Activated T-helper 2 cell treated with anti-CD3 and anti-CD28 coated beads, Interferon-gamma antibody, Interleukin-2, Interleukin-4, amounts not matched to agents 10 μg/mL and 5 μg/mL and 100 μg/mL, durations not matched to agents 14 hours and 24 hours and 36 hours (primary cell): ENCODE measurements at regions of chr2 and their contacts with region 1.

Region 1: GRCh38 chr2:68751397-68752339 is 17.1 kb downstream of the ARHGAP25 start:
- DNase-seq: peak; percentile 80
- H3K4me3 Mint-ChIP-seq: no peak overlapping the region
- H3K27ac Mint-ChIP-seq: peak overlapping the region; percentile 76
- H3K4me1 Mint-ChIP-seq: peaks cover 73% of the 10 kb centered on the region
- H3K27me3 Mint-ChIP-seq: no peaks in the 10 kb centered on the region

Region 2: GRCh38 chr2:68487773-68488355 is 263.8 kb before region 1 on chr2:
- intact Hi-C with region 1: loop called (anchors 5 kb)
- DNase-seq: no peak
- H3K4me3 Mint-ChIP-seq: no peak overlapping the region
- H3K27ac Mint-ChIP-seq: no peak overlapping the region
- H3K4me1 Mint-ChIP-seq: peaks cover 11% of the 10 kb centered on the region
- H3K27me3 Mint-ChIP-seq: no peaks in the 10 kb centered on the region

Region 3: GRCh38 chr2:68766376-68766845 is 14.7 kb after region 1 on chr2:
- intact Hi-C with region 1: loop called (anchors 1 kb)
- DNase-seq: peak; percentile 70
- H3K4me3 Mint-ChIP-seq: peak overlapping the region; percentile 68
- H3K27ac Mint-ChIP-seq: peak overlapping the region; percentile 93
- H3K4me1 Mint-ChIP-seq: peaks cover 91% of the 10 kb centered on the region
- H3K27me3 Mint-ChIP-seq: no peaks in the 10 kb centered on the region

Region 4: DNA sequence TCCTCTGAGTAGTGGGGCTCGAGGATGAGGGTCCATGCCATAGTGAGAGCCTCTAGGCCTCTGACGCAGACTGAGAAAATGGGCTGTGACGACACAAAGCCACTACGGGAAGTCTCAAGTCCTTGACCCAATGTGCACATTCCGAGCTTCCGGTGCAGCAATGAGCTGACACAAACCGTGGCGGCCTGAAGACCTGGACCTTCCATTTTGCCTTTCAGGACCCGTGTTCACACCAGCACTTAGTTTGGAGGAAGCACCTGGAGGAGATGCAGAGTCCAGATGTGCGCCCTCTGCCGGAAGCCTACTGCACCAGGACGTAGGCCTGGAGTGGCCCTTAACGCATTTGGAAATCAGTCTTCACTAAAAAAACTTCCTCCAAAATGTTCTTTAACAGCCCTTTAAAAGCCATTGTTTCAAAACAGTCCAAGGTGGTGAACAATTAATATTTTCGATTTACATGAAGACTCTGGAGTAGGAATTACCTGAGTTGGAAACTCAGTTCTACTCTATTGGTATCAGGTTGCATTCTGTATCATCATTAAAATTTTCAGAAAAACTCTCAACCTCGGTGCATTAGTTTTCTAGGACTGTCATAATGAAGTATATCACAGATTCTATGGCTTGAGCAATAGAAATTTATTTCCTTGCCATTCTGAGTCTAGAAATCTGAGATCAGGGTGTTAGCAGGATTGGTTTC is 85.6 kb after region 1 on chr2:
- intact Hi-C with region 1: loop called (anchors 2 kb)
- DNase-seq: peak; percentile 43
- H3K4me3 Mint-ChIP-seq: no peak overlapping the region
- H3K27ac Mint-ChIP-seq: peak overlapping the region; percentile 78
- H3K4me1 Mint-ChIP-seq: peaks cover 49% of the 10 kb centered on the region
- H3K27me3 Mint-ChIP-seq: no peaks in the 10 kb centered on the region

Region 5: GRCh38 chr2:68909793-68910674 is 158.4 kb after region 1 on chr2:
- intact Hi-C with region 1: loop called (anchors 2 kb)
- DNase-seq: peak; percentile 62
- H3K4me3 Mint-ChIP-seq: no peak overlapping the region
- H3K27ac Mint-ChIP-seq: peak overlapping the region; percentile 70
- H3K4me1 Mint-ChIP-seq: peaks cover 33% of the 10 kb centered on the region
- H3K27me3 Mint-ChIP-seq: no peaks in the 10 kb centered on the region

Region 6: GRCh38 chr2:68925295-68925896 is 173.7 kb after region 1 on chr2:
- intact Hi-C with region 1: loop called (anchors 1 kb)
- DNase-seq: peak; percentile 44
- H3K4me3 Mint-ChIP-seq: no peak overlapping the region
- H3K27ac Mint-ChIP-seq: no peak overlapping the region
- H3K4me1 Mint-ChIP-seq: peaks cover 6% of the 10 kb centered on the region
- H3K27me3 Mint-ChIP-seq: peaks cover 25% of the 10 kb centered on the region